ENCODE measurements at regions of chr6 and their contacts with region 1.

Region 1: DNA sequence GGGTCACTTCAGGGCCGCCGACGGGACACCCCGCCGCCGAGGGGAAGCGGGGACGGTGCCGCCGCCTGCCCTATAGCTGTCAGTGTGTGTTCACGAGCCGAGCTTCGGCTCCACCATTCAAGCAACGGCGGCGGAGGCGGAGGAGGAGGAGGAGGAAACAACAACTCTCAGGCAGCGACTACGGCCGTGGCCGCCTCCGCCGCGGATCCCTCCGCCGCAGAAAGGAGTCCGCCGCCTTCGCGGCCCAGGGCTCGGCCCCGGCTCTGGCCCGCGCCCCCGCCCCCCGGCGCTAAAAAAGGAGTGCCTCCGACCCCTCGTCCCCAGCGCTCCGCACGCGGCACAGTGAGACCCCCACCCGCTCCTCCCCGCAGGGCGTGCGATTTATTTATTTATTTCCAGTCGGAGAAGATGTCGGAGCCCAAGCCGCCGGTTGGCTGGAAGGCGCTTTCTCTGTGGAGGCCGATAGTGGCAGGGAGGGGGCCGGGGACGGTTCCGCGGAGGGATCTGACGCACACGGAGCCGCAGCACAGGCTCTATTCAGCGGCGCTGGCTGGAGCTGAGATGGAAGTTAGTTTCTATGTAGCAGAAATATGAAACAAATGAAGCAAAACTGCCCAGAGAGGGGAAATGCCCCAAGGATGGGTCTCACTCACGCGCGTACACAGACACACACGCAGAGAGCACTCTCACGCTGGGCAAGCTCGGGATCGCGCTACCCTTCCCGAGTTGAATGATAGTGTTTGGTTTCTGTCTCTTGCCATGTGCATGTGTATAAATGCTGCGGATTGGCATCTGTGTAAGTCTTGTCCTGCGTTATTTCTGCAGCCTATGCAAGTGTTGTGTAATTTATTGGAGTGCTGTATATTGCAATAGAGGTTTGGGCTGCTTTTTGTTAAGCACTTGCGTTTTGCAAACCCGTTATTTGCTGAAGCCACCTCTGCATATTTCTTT is at the start of gene PHIP:
- DNase-seq: peak; percentile 93
- H3K4me3 Mint-ChIP-seq: peak within 1 kb of the TSS; percentile 92
- H3K27ac Mint-ChIP-seq: peak within 1 kb of the TSS; percentile 96
- H3K4me1 Mint-ChIP-seq: peaks cover 32% of the 10 kb centered on the region
- H3K27me3 Mint-ChIP-seq: peaks cover 10% of the 10 kb centered on the region
- total RNA-seq, gene PHIP: 23.0 to 23.5 TPM

Region 2: GRCh38 chr6:78693835-78694234 is 384.5 kb before region 1 on chr6:
- CTCF ChIA-PET with region 1: no interaction called
- intact Hi-C with region 1: no loop called
- DNase-seq: no peak
- H3K4me3 Mint-ChIP-seq: no peak overlapping the region
- H3K27ac Mint-ChIP-seq: no peak overlapping the region
- H3K4me1 Mint-ChIP-seq: no peaks in the 10 kb centered on the region
- H3K27me3 Mint-ChIP-seq: no peaks in the 10 kb centered on the region

Region 3: GRCh38 chr6:78867370-78868040 is 210.8 kb before region 1 on chr6 and contains the start of gene IRAK1BP1:
- CTCF ChIA-PET with region 1: no interaction called
- intact Hi-C with region 1: loop called (anchors 1 kb)
- DNase-seq: peak; percentile 90
- H3K4me3 Mint-ChIP-seq: peak within 1 kb of the TSS; percentile 98
- H3K27ac Mint-ChIP-seq: peak within 1 kb of the TSS; percentile 85
- H3K4me1 Mint-ChIP-seq: peaks cover 19% of the 10 kb centered on the region
- H3K27me3 Mint-ChIP-seq: no peaks in the 10 kb centered on the region
- total RNA-seq, gene IRAK1BP1: 2.2 to 2.4 TPM

Region 4: DNA sequence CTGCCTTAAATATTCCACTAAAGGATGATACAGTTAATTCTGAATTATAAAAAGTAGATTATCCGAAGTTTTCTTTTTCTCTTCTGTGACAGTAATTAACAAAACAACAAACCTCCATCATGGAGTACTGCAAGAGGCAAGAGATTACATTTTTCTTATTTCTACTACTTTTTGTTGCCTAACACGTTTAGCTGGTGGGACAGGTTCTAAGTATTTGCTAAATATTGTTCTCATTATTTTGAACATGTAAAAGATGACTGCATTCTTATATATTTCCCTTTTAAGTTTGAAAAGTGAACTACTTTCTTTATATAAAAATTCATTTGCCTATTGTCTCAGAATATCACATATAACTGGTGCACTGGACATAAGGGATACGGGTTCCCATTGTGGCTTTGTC is 126.9 kb before region 1 on chr6:
- CTCF ChIA-PET with region 1: no interaction called
- intact Hi-C with region 1: no loop called
- DNase-seq: no peak
- H3K4me3 Mint-ChIP-seq: no peak overlapping the region
- H3K27ac Mint-ChIP-seq: no peak overlapping the region
- H3K4me1 Mint-ChIP-seq: no peaks in the 10 kb centered on the region
- H3K27me3 Mint-ChIP-seq: no peaks in the 10 kb centered on the region

Region 5: GRCh38 chr6:79034865-79035264 is 43.5 kb before region 1 on chr6:
- CTCF ChIA-PET with region 1: no interaction called
- intact Hi-C with region 1: loop called (anchors 1 kb)
- DNase-seq: peak; percentile 35
- H3K4me3 Mint-ChIP-seq: no peak overlapping the region
- H3K27ac Mint-ChIP-seq: peak overlapping the region; percentile 57
- H3K4me1 Mint-ChIP-seq: peaks cover 60% of the 10 kb centered on the region
- H3K27me3 Mint-ChIP-seq: no peaks in the 10 kb centered on the region

Region 6: DNA sequence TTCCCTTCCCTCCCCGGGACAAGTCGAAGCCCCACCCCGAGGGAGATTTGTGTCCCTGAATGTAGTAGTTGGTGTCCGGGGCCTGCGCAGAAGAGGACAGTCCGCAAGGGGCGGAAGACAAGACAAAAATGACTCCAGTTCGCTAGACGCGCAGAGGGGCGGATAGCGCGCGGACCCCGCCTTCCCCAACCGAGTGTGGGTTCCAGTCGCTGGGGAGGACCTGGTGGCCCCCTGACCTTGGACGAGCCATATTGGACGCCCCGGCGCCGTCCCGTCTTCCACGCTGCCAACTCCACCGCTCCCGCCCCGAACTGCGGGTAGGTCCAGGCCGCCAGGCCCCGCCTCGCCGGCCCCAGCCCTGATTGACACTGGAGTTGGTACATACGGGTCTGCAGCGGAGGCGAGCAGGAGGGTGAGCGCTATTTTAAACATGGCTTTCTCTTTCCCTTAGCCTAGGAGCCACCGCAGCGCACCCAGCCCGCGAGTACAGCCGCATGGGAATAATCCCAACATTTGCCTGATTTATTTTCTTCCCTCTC is 155.3 kb after region 1 on chr6:
- CTCF ChIA-PET with region 1: no interaction called
- intact Hi-C with region 1: loop called (anchors 1 kb)
- DNase-seq: peak; percentile 73
- H3K4me3 Mint-ChIP-seq: peak overlapping the region; percentile 95
- H3K27ac Mint-ChIP-seq: peak overlapping the region; percentile 78
- H3K4me1 Mint-ChIP-seq: peaks cover 14% of the 10 kb centered on the region
- H3K27me3 Mint-ChIP-seq: no peaks in the 10 kb centered on the region

Region 7: DNA sequence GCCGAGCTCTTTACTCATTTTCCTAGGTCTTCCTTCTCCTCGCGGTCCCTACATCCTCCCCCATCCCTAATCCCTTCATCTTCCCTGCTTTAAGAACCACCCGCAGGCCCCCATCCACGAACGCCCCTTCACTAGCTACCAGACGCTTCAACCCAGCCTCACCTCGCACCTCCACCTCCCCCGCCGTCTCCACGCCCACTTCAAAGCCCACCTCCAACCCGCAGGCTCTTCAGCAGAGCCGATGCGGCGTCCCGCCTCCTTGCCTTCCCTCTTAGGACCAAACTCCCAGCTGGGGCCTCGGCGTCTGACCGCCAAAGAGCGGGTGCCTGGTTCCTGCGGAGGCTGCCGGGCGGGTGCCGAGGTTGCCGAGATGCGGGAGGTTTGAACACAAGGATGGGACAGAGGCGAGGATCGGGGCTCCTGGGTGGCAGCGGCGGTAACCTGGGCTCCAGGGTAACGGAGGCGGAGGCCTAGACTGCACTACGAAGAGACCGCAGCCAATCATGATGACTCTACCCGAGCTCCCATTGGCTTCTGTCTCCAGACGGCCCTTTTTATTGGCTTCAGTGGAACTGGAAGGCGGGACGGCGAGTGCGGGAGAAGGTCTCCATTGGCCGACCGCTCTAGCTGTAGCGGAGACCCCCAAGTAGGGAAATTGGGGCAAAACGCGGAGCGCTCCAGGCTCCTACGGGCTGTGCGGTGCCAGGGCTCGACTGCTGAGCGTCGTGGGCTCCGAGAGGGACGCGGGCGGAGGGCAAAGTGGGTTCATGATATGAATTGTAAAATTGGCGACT is 458.8 kb after region 1 on chr6 and contains the start of gene LCA5:
- CTCF ChIA-PET with region 1: no interaction called
- intact Hi-C with region 1: loop called (anchors 1 kb)
- DNase-seq: peak; percentile 90
- H3K4me3 Mint-ChIP-seq: no peak within 1 kb of the TSS
- H3K27ac Mint-ChIP-seq: no peak within 1 kb of the TSS
- H3K4me1 Mint-ChIP-seq: no peaks in the 10 kb centered on the region
- H3K27me3 Mint-ChIP-seq: peaks cover 8% of the 10 kb centered on the region
- total RNA-seq, gene LCA5: 0.22 to 0.29 TPM

Region 8: DNA sequence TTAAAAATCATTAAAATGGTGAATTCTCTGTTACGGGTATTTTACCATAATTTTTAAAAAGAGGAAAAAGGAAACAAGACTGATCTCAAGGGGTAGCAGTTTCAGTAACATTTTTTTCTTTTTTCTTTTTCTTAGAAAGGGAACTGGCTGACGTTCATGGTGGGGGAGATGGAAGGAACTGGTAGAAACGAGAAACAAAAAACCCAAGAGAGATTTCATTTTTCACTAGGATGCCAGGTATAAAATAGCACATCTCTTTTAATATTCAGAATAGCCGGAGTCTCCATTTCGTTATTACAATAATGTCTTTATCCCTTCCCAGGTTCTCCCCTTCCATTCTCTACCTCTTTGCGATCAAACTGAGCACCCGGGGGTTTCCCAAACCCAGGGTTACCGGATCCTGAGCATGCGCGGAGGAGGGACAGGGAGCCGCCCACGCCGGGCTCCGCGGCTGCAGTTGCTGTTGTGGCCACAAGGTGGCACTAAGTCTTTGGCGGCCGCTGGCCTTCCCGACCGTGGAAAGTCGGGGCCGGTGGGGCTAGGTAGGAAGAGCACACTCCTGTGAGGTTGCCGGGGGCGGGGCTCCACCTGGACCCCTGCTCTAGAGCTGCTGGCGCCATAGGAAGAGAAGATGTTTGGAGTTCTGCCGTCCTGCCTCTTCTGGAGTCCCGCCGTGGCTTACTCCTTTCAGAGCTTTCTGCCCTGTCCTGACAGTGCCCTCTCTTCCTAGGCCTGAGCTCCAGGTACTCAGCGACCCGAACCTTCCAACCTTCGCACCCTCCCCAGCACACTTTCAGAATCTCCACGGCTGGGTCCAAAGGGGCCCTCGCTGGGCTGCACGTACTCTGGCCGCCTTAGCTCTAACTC is 699.6 kb after region 1 on chr6:
- CTCF ChIA-PET with region 1: no interaction called
- intact Hi-C with region 1: loop called (anchors 5 kb)
- DNase-seq: peak; percentile 92
- H3K4me3 Mint-ChIP-seq: peak overlapping the region; percentile 64
- H3K27ac Mint-ChIP-seq: peak overlapping the region; percentile 50
- H3K4me1 Mint-ChIP-seq: peaks cover 6% of the 10 kb centered on the region
- H3K27me3 Mint-ChIP-seq: no peaks in the 10 kb centered on the region

Region 9: DNA sequence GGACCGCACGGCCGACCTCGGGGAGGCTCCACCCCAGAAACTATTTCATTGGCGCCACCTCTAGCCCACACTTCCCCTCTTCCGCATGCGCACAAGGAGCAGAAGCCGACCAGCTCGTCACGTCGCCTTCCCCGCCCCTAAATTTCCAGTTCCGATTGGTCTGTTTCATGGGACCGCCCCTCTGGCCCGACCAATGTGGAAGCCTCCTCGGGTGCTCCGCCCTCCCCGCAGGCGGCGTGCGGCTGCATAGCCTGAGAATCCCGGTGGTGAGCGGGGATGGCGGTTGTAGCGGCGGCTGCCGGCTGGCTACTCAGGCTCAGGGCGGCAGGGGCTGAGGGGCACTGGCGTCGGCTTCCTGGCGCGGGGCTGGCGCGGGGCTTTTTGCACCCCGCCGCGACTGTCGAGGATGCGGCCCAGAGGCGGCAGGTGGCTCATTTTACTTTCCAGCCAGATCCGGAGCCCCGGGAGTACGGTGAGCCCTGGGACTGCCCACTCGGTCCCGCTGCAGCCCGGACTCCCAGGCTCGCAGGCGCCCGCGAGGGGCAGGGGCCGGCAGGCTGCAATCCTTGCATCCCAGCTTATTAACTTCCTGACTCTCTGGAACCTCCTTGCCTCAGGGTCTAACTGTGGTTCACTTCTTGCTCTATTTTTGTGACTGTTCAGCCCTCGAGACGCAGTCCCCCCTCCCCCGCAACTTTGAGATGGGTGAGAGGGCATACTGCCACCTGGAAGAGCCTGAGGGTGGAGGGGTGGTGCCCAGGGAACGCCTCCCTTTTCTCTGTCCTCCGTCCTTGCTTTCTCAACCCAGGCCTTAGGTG is 1028.3 kb after region 1 on chr6 and contains the start of gene BCKDHB:
- CTCF ChIA-PET with region 1: no interaction called
- intact Hi-C with region 1: loop called (anchors 2 kb)
- DNase-seq: peak; percentile 99
- H3K4me3 Mint-ChIP-seq: peak within 1 kb of the TSS; percentile 90
- H3K27ac Mint-ChIP-seq: peak within 1 kb of the TSS; percentile 84
- H3K4me1 Mint-ChIP-seq: peaks cover 10% of the 10 kb centered on the region
- H3K27me3 Mint-ChIP-seq: no peaks in the 10 kb centered on the region
- total RNA-seq, gene BCKDHB: 15.5 to 18.5 TPM